ENCODE measurements at regions of chr7 and their contacts with region 1.

Region 1: GRCh38 chr7:140175221-140176121 is 1.3 kb downstream of the KDM7A start:
- DNase-seq: peak; percentile 73 to 98 (median 92)
- ATAC-seq: peak; percentile 70 to 71
- H3K4me3 Mint-ChIP-seq: peak overlapping the region; percentile 84 to 94 (median 91)
- H3K27ac Mint-ChIP-seq: peak overlapping the region; percentile 85 to 98 (median 95)
- H3K4me1 Mint-ChIP-seq: peaks cover 27 to 63% (median 50%) of the 10 kb centered on the region in 4 donors
- H3K27me3 Mint-ChIP-seq: no peaks in the 10 kb centered on the region

Region 2: GRCh38 chr7:140049339-140050024 is 126.0 kb before region 1 on chr7:
- POLR2A ChIA-PET with region 1: no interaction called
- DNase-seq: no peak
- ATAC-seq: no peak
- H3K4me3 Mint-ChIP-seq: no peak overlapping the region
- H3K27ac Mint-ChIP-seq: peak overlapping the region in 5 of 10 donors; percentile 11 to 79 (median 44)
- H3K4me1 Mint-ChIP-seq: peaks cover 9 to 32% (median 25%) of the 10 kb centered on the region in 4 donors
- H3K27me3 Mint-ChIP-seq: no peaks in the 10 kb centered on the region

Region 3: DNA sequence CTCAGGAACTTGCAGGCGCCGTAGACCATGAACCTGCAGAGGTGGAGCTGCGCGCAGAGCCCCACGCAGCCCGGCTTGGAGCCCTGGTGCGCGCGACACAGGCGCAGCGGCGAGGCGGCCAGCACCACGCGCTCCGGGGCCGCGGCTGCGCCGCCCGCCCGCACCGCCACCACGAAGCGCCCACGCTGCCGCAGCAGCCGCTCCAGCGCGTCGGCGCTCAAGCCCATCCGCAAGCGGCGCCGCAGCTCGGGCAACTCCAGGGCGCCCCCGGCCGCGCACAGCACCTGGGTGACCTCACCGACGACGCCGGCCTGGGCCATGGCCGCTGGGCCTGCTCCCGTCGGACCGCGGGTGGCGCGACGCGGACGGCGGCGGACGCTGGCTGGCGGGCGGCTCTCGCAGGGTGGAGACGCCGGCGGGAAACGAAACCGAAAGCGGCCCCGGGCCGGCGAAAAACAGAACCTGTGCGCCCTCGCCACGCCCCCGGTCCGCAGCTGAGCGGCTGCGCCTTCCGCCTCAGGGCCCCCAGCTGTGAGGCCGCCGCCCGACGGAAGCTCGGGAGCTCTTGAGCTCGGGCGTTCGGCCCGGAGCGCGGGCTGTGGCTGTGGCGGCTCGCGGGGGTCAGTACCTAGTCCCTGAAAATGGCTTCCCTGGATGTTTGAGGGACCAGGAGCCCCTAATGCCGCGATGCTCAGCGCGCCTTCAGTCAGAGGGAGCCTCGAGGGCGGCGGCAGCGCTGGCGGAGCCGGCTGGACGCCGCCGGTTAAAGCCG is 112.8 kb before region 1 on chr7 and contains the start of gene PARP12:
- POLR2A ChIA-PET with region 1: interaction called, 18 read pairs
- DNase-seq: peak; percentile 73 to 92 (median 84)
- ATAC-seq: peak; percentile 76 to 80
- H3K4me3 Mint-ChIP-seq: peak within 1 kb of the TSS; percentile 88 to 97 (median 95)
- H3K27ac Mint-ChIP-seq: peak within 1 kb of the TSS; percentile 80 to 97 (median 96)
- H3K4me1 Mint-ChIP-seq: peaks cover 26 to 51% (median 47%) of the 10 kb centered on the region in 4 donors
- H3K27me3 Mint-ChIP-seq: no peaks in the 10 kb centered on the region
- polyA plus RNA-seq, gene PARP12: 18.9 to 34.6 (median 28.1) TPM

Region 4: DNA sequence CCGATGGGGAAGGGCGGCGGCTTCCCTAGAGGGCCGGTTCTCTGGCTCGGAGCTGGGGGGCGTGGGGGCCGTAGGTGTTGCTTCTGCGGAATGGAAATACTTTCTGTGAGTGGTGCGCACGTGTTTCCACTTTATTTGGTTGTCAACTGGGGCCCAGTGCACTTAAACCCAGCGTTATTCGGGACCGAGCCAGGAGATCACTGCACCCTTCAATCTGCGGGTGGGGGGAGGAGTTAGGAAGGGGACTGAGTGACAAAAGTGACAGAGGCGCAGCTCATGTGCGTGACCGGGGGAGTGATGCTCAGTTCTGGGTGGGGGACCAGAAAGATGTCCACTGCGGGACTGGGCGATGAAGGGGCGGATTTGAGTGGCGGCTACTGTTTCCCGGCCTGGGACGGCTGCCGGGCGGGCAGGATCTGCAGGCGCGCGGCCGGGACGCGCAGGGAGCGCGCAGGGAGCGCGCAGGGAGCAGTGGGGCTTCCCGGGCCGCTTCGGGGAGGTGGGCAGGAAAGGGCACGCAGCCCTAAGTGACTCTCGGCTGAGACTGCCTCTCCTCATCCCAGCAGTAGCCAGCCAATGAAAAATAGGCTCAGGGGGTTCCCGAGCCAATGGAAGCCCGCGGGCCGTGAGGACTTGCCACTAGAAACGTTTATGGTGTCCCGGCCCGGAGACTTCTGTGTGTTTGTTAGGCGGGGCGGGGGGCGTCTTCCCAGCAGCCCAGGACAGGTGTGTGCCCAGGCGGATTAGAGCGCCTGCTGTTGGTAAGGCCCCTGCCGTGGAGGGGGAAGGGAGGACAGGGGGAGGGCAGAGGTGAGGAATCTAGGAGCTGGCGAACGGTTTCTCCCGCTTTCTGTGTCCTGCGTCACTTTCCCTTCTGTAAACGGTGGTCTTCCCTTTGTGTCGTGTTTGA is 55.6 kb after region 1 on chr7:
- POLR2A ChIA-PET with region 1: interaction called, 303 read pairs
- DNase-seq: peak; percentile 36 to 80 (median 50)
- ATAC-seq: peak; percentile 23 to 24
- H3K4me3 Mint-ChIP-seq: peak overlapping the region; percentile 93 to 98 (median 96)
- H3K27ac Mint-ChIP-seq: peak overlapping the region; percentile 96 to 100 (median 99)
- H3K4me1 Mint-ChIP-seq: peaks cover 21 to 59% (median 48%) of the 10 kb centered on the region in 4 donors
- H3K27me3 Mint-ChIP-seq: no peaks in the 10 kb centered on the region

Region 5: GRCh38 chr7:140269004-140269638 is 93.7 kb after region 1 on chr7:
- POLR2A ChIA-PET with region 1: interaction called, 64 read pairs
- DNase-seq: peak in 4 of 10 donors; percentile 25 to 75 (median 56)
- ATAC-seq: peak; percentile 94 to 95
- H3K4me3 Mint-ChIP-seq: peak overlapping the region; percentile 16 to 70 (median 60)
- H3K27ac Mint-ChIP-seq: peak overlapping the region; percentile 79 to 95 (median 90)
- H3K4me1 Mint-ChIP-seq: peaks cover 18 to 46% (median 38%) of the 10 kb centered on the region in 4 donors
- H3K27me3 Mint-ChIP-seq: no peaks in the 10 kb centered on the region

Region 6: DNA sequence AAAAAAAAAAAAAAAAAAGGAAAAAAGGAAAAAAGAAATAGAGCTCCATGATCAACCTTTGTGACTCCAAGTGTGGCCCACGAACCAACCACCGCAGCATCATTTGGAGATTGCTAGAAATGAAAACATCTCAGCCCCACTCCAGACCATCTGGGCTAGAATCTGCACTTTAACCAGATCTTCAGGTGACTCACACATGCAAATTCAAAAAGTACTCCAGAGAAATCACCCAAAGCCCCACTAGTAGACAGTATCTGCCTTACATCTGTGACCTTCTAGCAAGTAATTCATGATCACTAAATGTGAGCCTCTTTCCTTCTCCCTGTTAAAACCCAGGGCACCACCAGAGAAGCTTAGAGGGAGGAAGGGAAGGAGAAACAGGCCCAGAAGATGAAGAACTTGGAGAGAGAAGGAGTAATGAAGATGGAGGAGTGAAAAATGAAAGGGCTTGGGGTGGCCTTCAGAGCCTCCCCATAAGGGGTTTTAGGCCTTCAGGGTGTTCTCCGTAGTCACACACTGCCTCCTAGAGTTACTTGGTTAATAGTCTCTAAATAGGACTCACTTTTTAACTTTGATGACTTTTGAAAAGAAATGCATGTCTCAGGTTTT is 128.8 kb after region 1 on chr7:
- POLR2A ChIA-PET with region 1: interaction called, 68 read pairs
- DNase-seq: peak in 9 of 10 donors; percentile 35 to 80 (median 62)
- ATAC-seq: peak; percentile 99 to 100
- H3K4me3 Mint-ChIP-seq: no peak overlapping the region
- H3K27ac Mint-ChIP-seq: peak overlapping the region in 9 of 10 donors; percentile 33 to 91 (median 82)
- H3K4me1 Mint-ChIP-seq: peaks cover 4 to 11% (median 8%) of the 10 kb centered on the region in 4 donors
- H3K27me3 Mint-ChIP-seq: peaks cover 0 to under 1% (median 0%) of the 10 kb centered on the region in 5 donors